ENCODE measurements at regions of chr14 and their contacts with region 1.

Region 1: GRCh38 chr14:58501214-58501816 is 73.8 kb downstream of the KIAA0586 start:
- DNase-seq: peak; percentile 13
- H3K4me3 Mint-ChIP-seq: no peak overlapping the region
- H3K27ac Mint-ChIP-seq: no peak overlapping the region
- H3K4me1 Mint-ChIP-seq: no peaks in the 10 kb centered on the region
- H3K27me3 Mint-ChIP-seq: no peaks in the 10 kb centered on the region

Region 2: GRCh38 chr14:58826845-58827686 is 325.8 kb after region 1 on chr14:
- intact Hi-C with region 1: loop called (anchors 5 kb)
- DNase-seq: no peak
- H3K4me3 Mint-ChIP-seq: no peak overlapping the region
- H3K27ac Mint-ChIP-seq: no peak overlapping the region
- H3K4me1 Mint-ChIP-seq: peaks cover 6% of the 10 kb centered on the region
- H3K27me3 Mint-ChIP-seq: peaks cover 5% of the 10 kb centered on the region

Region 3: DNA sequence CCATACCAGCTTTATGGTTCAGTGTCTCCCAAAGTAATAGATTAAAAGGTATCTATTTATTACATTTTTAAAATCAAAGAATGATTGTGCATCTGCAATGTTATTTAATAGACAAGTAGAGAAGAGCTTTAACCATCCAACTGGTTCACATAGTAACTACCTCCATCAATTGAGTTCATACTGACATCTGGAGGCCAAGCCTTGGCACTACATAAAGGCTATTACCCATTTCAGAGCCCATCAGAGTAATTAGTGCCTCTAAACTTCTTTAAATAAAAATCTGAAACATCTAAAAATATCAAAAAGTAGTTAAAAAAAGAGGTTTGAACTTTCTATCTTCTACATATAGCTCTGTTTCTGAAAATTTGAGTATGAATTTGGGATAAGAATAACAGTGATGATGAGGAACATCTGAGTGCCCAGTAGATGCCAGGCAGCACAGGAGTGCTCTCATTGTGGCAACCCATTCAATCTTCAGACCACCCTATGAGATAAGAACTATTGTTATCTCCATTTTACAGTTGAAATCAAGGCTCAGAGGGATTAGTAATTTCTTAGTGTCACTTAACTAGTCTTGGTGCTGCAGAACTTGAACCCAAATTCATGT is 554.2 kb after region 1 on chr14:
- intact Hi-C with region 1: loop called (anchors 1 kb)
- DNase-seq: no peak
- H3K4me3 Mint-ChIP-seq: no peak overlapping the region
- H3K27ac Mint-ChIP-seq: no peak overlapping the region
- H3K4me1 Mint-ChIP-seq: no peaks in the 10 kb centered on the region
- H3K27me3 Mint-ChIP-seq: no peaks in the 10 kb centered on the region

Region 4: GRCh38 chr14:59438195-59438647 is 936.9 kb after region 1 on chr14:
- intact Hi-C with region 1: loop called (anchors 5 kb)
- DNase-seq: no peak
- H3K4me3 Mint-ChIP-seq: no peak overlapping the region
- H3K27ac Mint-ChIP-seq: no peak overlapping the region
- H3K4me1 Mint-ChIP-seq: no peaks in the 10 kb centered on the region
- H3K27me3 Mint-ChIP-seq: peaks cover 6% of the 10 kb centered on the region

Measured in activated T-helper 1 cell treated with anti-CD3 and anti-CD28 coated beads, Interleukin-12 subunit alpha, Interleukin-12 subunit beta, Interleukin-2, Interleukin-4 antibody, amounts not matched to agents 30 ng/mL and 10 ng/mL and 1 ng/mL, durations not matched to agents 14 hours and 24 hours and 36 hours (primary cell).